Heart right ventricle (tissue), 16 donors: ENCODE measurements at regions of chr2 and their contacts with region 1.

Region 1: GRCh38 chr2:8623958-8624591 is 57.8 kb upstream of the ID2 start:
- DNase-seq: no peak
- ATAC-seq: peak in 2 of 8 donors; percentile 16 to 20
- H3K4me3 ChIP-seq: no peak overlapping the region
- H3K27ac ChIP-seq: no peak overlapping the region
- H3K4me1 ChIP-seq: peaks cover 0 to 12% (median 0%) of the 10 kb centered on the region in 9 donors
- H3K27me3 ChIP-seq: no peaks in the 10 kb centered on the region
- CTCF ChIP-seq: no peak

Region 2: GRCh38 chr2:8123464-8123863 is 500.6 kb before region 1 on chr2:
- intact Hi-C with region 1: loop called in 1 of 10 experiments (anchors 1 kb)
- DNase-seq: no peak
- ATAC-seq: no peak
- H3K4me3 ChIP-seq: no peak overlapping the region
- H3K27ac ChIP-seq: no peak overlapping the region
- H3K4me1 ChIP-seq: peaks cover 0 to 47% (median 25%) of the 10 kb centered on the region in 9 donors
- H3K27me3 ChIP-seq: no peaks in the 10 kb centered on the region
- CTCF ChIP-seq: no peak

Region 3: DNA sequence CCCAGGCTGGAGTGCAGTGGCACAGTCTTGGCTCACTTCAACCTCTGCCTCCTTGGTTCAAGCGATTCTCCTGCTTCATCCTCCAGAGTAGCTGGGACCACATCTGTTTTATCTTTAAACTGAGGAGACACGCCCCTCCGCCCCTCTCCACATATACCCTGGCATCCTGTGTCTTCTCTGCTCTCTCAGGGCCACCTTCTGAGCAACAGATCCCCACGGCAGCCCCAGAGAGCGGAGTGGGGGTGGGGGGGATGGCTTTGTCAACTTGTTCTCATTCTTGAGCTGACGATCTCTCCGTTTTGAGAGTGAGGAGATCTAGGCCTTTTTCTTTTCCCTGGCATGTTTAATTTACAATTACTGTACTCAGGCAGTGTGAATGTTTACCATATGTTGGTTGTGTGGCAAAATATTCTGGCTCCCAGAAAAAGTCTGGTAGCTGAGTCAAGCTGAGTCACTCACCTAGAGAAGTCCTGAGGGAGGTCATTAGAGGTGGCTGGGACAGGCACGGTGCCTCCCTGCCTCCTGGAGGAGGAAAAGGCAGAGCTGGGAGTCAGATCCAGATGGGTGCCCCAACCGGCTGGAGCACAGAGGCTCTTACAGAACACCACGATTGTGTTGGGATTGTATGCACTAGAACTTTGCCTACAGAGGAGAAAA is 38.3 kb after region 1 on chr2:
- intact Hi-C with region 1: loop called in 1 of 10 experiments (anchors 5 kb)
- DNase-seq: no peak
- ATAC-seq: no peak
- H3K4me3 ChIP-seq: no peak overlapping the region
- H3K27ac ChIP-seq: no peak overlapping the region
- H3K4me1 ChIP-seq: peaks cover 0 to 20% (median 10%) of the 10 kb centered on the region in 9 donors
- H3K27me3 ChIP-seq: no peaks in the 10 kb centered on the region
- CTCF ChIP-seq: no peak